Posterior cingulate gyrus (tissue), 11 donors: ENCODE measurements at regions of chr1 and their contacts with region 1.

Region 1: DNA sequence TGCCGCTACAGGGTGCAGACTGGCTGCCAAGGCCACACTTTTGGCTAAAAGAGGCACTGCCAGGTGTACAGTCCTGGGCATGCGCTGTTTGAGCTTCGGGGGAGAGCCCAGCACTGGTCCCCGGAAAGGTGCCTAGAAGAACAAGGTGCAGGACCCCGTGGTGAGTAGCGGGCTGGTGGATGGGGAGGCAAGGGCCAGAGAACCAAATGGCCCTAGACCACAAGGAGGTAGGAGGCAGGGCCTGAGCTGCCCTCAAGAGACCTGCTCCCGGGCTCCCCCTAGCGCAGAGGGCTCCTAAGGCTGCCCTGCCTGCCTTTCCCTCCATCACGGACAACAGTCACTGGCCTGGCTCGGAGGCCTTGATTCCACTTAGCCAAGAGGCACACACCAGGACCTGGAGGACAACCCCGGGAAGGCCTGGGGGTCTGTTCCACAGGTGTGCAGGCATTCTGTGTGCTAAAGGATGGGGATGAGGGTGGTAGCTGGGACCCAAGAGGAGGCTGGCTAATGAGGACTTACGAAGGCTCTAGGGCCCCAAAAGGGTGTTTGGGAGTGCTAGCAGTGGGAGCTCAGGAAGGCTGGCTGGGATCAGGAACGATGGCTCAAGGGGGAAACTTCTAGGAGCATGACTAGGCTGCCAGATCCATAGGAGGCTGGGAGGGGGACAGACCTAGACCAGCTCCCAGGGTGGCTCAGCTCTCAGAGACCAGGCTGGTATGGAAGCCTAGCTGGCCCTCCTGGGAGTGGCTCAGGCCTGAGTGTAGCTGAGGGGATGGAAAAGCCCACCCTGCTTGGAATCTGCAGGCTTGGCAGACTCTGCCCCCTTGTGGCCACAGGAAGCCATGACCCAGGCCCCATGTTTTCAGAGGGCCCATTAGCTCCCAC is 742 bp downstream of the ARTN start:
- DNase-seq: peak in 8 of 10 donors; percentile 66 to 95 (median 70)

Region 2: DNA sequence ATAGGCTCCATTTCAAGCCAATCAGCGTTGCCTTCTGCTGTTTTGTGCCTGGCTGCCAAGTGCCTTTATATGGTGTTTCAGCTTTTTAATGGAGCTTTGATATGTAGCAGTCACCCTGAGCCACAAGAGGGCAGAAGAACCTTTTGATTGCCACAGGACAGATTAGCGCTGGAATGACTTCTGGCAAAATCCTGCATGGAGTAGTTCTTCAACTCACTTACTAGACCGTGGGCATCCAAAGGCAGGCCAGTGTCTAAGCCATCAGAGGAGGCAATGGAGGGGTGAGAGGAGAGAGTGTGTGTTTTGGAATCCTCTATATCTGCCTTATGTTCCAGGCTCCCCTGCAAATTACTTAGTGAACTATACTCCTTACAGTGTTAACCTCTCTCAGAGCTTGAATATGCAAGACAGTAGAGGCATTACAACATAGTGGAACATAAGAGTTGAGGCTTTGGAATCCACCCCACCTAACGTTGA is 170.8 kb before region 1 on chr1:
- intact Hi-C with region 1: loop called (anchors 1 kb)
- DNase-seq: peak in 7 of 10 donors; percentile 22 to 92 (median 66)